ENCODE measurements at regions of chr10 and their contacts with region 1.

Region 1: GRCh38 chr10:13160934-13161856 is at the start of gene MCM10:
- DNase-seq: peak; percentile 98
- H3K4me3 Mint-ChIP-seq: peak within 1 kb of the TSS; percentile 93
- H3K27ac Mint-ChIP-seq: peak within 1 kb of the TSS; percentile 94
- H3K4me1 Mint-ChIP-seq: peaks cover 57% of the 10 kb centered on the region
- H3K27me3 Mint-ChIP-seq: no peaks in the 10 kb centered on the region
- total RNA-seq, gene MCM10: 104 and 106 TPM in 2 replicates

Region 2: GRCh38 chr10:12042797-12043651 is 1118.2 kb before region 1 on chr10 and contains the start of gene UPF2:
- intact Hi-C with region 1: loop called (anchors 5 kb)
- DNase-seq: peak; percentile 94
- H3K4me3 Mint-ChIP-seq: peak within 1 kb of the TSS; percentile 99
- H3K27ac Mint-ChIP-seq: peak within 1 kb of the TSS; percentile 99
- H3K4me1 Mint-ChIP-seq: peaks cover 34% of the 10 kb centered on the region
- H3K27me3 Mint-ChIP-seq: no peaks in the 10 kb centered on the region
- total RNA-seq, gene UPF2: 38.9 and 43.6 TPM in 2 replicates

Region 3: DNA sequence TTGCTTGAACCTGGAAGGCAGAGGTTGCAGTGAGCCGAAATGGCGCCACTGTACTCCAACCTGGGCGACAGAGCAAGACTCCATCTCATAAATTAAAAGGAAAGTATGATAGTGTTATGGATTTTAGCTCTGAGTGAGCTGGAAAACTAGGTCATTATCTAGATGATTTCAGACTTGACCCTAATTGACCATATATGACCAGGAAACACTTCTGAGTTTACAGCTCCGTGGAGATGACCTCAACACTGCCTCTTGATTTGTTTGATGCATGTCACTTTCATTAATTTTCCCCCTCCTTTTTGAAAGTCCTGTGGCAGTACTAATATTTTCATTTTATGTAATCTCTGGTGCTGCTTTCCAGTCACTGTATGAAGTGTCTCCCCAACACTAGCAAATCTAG is 1039.5 kb before region 1 on chr10:
- intact Hi-C with region 1: loop called (anchors 5 kb)
- DNase-seq: no peak
- H3K4me3 Mint-ChIP-seq: peak overlapping the region; percentile 59
- H3K27ac Mint-ChIP-seq: peak overlapping the region; percentile 95
- H3K4me1 Mint-ChIP-seq: peaks cover 34% of the 10 kb centered on the region
- H3K27me3 Mint-ChIP-seq: no peaks in the 10 kb centered on the region

Region 4: GRCh38 chr10:12981570-12981969 is 179.6 kb before region 1 on chr10:
- intact Hi-C with region 1: no loop called
- DNase-seq: no peak
- H3K4me3 Mint-ChIP-seq: no peak overlapping the region
- H3K27ac Mint-ChIP-seq: no peak overlapping the region
- H3K4me1 Mint-ChIP-seq: no peaks in the 10 kb centered on the region
- H3K27me3 Mint-ChIP-seq: peaks cover 2% of the 10 kb centered on the region

Region 5: GRCh38 chr10:13056456-13057077 is 104.6 kb before region 1 on chr10:
- intact Hi-C with region 1: no loop called
- DNase-seq: no peak
- H3K4me3 Mint-ChIP-seq: no peak overlapping the region
- H3K27ac Mint-ChIP-seq: no peak overlapping the region
- H3K4me1 Mint-ChIP-seq: no peaks in the 10 kb centered on the region
- H3K27me3 Mint-ChIP-seq: no peaks in the 10 kb centered on the region

Region 6: GRCh38 chr10:13302814-13303555 is 141.8 kb after region 1 on chr10:
- intact Hi-C with region 1: loop called (anchors 1 kb)
- DNase-seq: no peak
- H3K4me3 Mint-ChIP-seq: peak overlapping the region; percentile 82
- H3K27ac Mint-ChIP-seq: no peak overlapping the region
- H3K4me1 Mint-ChIP-seq: peaks cover 20% of the 10 kb centered on the region
- H3K27me3 Mint-ChIP-seq: no peaks in the 10 kb centered on the region

Region 7: GRCh38 chr10:13382703-13383398 is 221.7 kb after region 1 on chr10:
- intact Hi-C with region 1: no loop called
- DNase-seq: no peak
- H3K4me3 Mint-ChIP-seq: no peak overlapping the region
- H3K27ac Mint-ChIP-seq: no peak overlapping the region
- H3K4me1 Mint-ChIP-seq: peaks cover 9% of the 10 kb centered on the region
- H3K27me3 Mint-ChIP-seq: peaks cover 25% of the 10 kb centered on the region

Region 8: DNA sequence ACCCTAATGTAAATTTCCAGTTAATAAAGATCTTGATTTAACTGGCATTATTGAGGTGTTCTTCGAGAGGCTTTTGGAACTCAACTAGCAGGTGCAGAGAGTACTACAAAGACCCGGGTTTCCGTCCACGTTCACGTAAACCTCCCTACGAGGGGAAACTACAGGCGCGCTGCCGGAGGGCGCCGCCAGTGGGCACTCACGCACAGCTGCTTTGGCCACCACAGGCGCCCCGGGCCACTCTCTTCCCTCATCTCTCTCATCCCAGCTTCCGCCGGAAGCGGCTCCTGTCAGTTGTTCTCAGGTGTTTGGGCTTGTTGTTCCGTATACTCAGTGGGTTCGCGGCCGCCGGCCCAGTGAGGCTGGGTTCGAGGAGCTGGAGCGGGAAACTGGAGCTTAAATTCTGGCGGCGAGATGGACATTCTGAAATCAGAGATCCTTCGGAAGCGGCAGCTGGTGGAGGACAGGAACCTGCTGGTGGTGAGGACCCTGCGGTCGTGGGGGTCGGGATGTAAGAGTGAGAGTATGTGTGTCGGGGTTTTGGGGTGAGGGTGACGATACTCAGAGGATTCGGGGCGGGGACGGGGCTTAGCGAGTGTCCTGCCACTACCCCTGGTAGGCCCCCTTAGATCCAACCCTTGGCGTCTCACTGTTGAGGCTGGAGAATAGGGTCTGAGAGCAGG is 425.6 kb after region 1 on chr10 and contains the start of gene PRPF18:
- intact Hi-C with region 1: loop called (anchors 1 kb)
- DNase-seq: peak; percentile 89
- H3K4me3 Mint-ChIP-seq: peak within 1 kb of the TSS; percentile 100
- H3K27ac Mint-ChIP-seq: peak within 1 kb of the TSS; percentile 98
- H3K4me1 Mint-ChIP-seq: peaks cover 16% of the 10 kb centered on the region
- H3K27me3 Mint-ChIP-seq: peaks cover 11% of the 10 kb centered on the region
- total RNA-seq, gene PRPF18: 24.8 and 25.6 TPM in 2 replicates

Region 9: GRCh38 chr10:13717931-13718772 is 557.0 kb after region 1 on chr10:
- intact Hi-C with region 1: no loop called
- DNase-seq: no peak
- H3K4me3 Mint-ChIP-seq: peak overlapping the region; percentile 45
- H3K27ac Mint-ChIP-seq: no peak overlapping the region
- H3K4me1 Mint-ChIP-seq: peaks cover 15% of the 10 kb centered on the region
- H3K27me3 Mint-ChIP-seq: peaks cover 15% of the 10 kb centered on the region